ENCODE measurements at regions of chr18 and their contacts with region 1.

Region 1: GRCh38 chr18:55234366-55235093 is 275.3 kb upstream of the CCDC68 start:
- DNase-seq: peak; percentile 23 to 90
- H3K4me3 ChIP-seq: peak overlapping the region in 1 of 2 donors; percentile 12
- H3K27ac ChIP-seq: peak overlapping the region in 1 of 2 donors; percentile 51
- H3K4me1 ChIP-seq: peaks cover 0 to 5% of the 10 kb centered on the region in 2 donors
- H3K27me3 ChIP-seq: no peaks in the 10 kb centered on the region
- CTCF ChIP-seq: peak; percentile 55 to 86 (median 82)

Region 2: GRCh38 chr18:54416436-54416835 is 818.1 kb before region 1 on chr18:
- intact Hi-C with region 1: no loop called
- DNase-seq: no peak
- H3K4me3 ChIP-seq: no peak overlapping the region
- H3K27ac ChIP-seq: no peak overlapping the region
- H3K4me1 ChIP-seq: no peaks in the 10 kb centered on the region
- H3K27me3 ChIP-seq: no peaks in the 10 kb centered on the region
- CTCF ChIP-seq: no peak

Region 3: DNA sequence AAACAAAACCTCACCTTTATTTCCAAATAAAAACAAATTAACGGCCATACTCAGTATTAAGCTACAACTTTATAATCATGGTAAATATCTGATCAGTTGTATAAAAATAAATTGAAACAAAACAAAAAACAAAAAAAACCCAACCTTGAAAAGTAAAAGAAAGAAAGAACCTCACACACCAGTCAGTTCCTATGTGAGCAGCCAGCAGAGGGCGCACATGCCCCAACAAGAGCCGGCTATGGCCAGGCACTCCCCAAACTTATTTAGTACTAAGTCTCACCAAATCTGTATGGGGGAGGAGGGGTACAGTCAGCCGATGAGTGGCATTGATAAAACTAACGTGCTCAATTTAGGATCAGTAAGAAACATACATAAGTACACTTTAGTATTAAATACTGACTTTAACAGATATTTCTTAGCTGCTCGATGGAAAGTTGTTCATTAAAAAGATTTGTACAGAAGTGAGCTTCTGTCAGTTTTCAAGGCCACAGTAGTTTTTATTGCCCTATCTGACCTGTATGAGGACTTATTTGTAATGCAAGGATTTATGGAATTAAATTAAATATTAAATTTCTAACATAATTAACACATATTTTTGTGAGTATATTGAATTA is 180.8 kb after region 1 on chr18:
- intact Hi-C with region 1: loop called (anchors 2 kb)
- DNase-seq: peak; percentile 22 to 92
- H3K4me3 ChIP-seq: no peak overlapping the region
- H3K27ac ChIP-seq: no peak overlapping the region
- H3K4me1 ChIP-seq: no peaks in the 10 kb centered on the region
- H3K27me3 ChIP-seq: no peaks in the 10 kb centered on the region
- CTCF ChIP-seq: peak; percentile 60 to 90 (median 85)

Region 4: GRCh38 chr18:55781481-55781957 is 547.0 kb after region 1 on chr18:
- intact Hi-C with region 1: loop called (anchors 2 kb)
- DNase-seq: no peak
- H3K4me3 ChIP-seq: no peak overlapping the region
- H3K27ac ChIP-seq: no peak overlapping the region
- H3K4me1 ChIP-seq: no peaks in the 10 kb centered on the region
- H3K27me3 ChIP-seq: no peaks in the 10 kb centered on the region
- CTCF ChIP-seq: peak; percentile 33 to 48 (median 37)

Region 5: DNA sequence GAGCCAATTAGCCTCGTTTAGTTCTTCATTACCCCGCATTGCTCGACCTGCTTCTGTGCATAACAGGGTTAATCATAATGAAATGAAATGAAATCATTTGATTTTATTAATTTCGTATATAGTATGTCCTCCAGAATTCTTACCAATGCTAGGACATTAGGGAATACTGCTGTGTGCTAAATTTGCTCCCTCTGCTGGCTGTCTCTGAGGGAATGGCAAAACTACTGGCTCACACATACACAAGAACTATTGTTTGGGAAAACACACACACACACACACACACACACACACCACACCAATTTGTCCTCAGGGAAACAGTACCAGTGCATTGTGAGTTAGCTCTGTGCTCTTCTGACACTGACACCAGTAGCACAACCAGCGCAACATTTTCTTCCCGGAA is 626.7 kb after region 1 on chr18:
- intact Hi-C with region 1: loop called (anchors 5 kb)
- DNase-seq: no peak
- H3K4me3 ChIP-seq: no peak overlapping the region
- H3K27ac ChIP-seq: no peak overlapping the region
- H3K4me1 ChIP-seq: no peaks in the 10 kb centered on the region
- H3K27me3 ChIP-seq: no peaks in the 10 kb centered on the region
- CTCF ChIP-seq: peak in 2 of 3 experiments; percentile 6 to 43

Region 6: DNA sequence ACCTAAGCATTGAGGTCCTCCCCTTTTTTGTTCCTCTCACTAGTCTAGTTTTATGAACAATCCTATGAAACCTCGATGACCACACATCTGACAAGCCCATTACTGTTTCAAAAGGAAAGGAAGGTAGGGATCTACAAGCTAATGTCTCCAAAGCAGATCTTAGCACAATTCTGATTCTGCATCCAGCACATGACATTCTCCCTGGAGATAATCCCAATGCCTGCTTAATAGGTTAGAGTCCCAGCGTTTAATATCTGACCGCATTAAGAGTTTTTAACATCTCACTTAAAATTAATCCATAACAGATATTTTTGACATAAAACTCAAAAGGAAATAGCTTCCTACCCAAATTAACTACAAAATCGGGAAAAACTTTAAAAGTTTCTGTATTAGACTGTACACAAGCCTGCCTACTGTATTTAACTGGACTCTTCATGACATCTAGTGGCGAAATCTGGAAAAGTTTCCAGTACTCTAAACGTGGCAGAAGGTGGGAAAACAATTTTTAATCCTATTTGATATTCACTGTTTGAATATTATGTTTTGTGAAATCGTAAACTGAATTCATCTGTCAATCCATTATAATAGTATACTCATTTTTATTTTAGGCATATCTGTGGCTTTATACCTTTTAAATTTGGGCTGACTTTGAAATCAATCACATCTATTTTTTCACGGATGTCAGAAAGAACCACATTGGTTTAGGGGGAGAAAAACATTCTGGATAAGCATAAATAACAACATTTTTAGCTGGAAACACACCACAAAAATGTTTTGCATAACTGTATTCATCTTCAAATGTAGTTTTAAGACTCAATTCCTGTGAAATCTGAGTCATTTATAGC is 1341.5 kb after region 1 on chr18:
- intact Hi-C with region 1: loop called (anchors 5 kb)
- DNase-seq: no peak
- H3K4me3 ChIP-seq: no peak overlapping the region
- H3K27ac ChIP-seq: no peak overlapping the region
- H3K4me1 ChIP-seq: peaks cover 0 to 10% of the 10 kb centered on the region in 2 donors
- H3K27me3 ChIP-seq: no peaks in the 10 kb centered on the region
- CTCF ChIP-seq: peak; percentile 53 to 73 (median 63)

Region 7: GRCh38 chr18:56650944-56651770 is 1416.6 kb after region 1 on chr18 and contains the start of gene WDR7:
- intact Hi-C with region 1: loop called (anchors 5 kb)
- DNase-seq: peak; percentile 96 to 99
- H3K4me3 ChIP-seq: peak within 1 kb of the TSS; percentile 80 to 94
- H3K27ac ChIP-seq: peak within 1 kb of the TSS; percentile 87
- H3K4me1 ChIP-seq: peaks cover 7 to 13% of the 10 kb centered on the region in 2 donors
- H3K27me3 ChIP-seq: no peaks in the 10 kb centered on the region
- CTCF ChIP-seq: no peak
- total RNA-seq, gene WDR7: 13.5 TPM

Measured in ascending aorta (tissue), 2 donors.